Ovary (tissue), 10 donors: ENCODE measurements at regions of chr2 and their contacts with region 1.

Region 1: GRCh38 chr2:24022975-24023575 is 13.2 kb downstream of the MFSD2B start:
- DNase-seq: no peak
- H3K4me3 ChIP-seq: no peak overlapping the region
- H3K27ac ChIP-seq: no peak overlapping the region
- H3K4me1 ChIP-seq: no peaks in the 10 kb centered on the region
- H3K27me3 ChIP-seq: no peaks in the 10 kb centered on the region
- CTCF ChIP-seq: no peak
- EP300 ChIP-seq: no peak
- POLR2A ChIP-seq: no peak

Region 2: DNA sequence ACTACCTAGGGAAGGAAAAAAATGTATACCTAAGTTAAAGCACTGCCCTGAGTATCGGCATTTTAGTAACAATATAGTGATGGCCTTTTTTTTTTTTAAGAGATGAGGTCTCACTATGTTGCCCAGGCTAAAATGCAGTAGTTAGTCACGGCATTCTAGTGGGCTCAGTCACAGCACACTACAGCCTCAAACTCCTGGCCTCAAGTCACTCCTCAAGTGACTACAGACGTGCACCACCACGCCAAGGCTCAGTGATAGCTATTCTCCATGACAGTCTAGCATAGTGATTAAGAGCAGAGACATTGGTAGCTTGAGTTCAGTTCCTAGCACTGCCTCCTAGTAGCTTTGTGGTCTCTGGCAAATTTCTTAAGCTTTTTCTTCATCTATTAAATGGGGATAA is 55.2 kb before region 1 on chr2:
- intact Hi-C with region 1: no loop called
- DNase-seq: no peak
- H3K4me3 ChIP-seq: no peak overlapping the region
- H3K27ac ChIP-seq: no peak overlapping the region
- H3K4me1 ChIP-seq: no peaks in the 10 kb centered on the region
- H3K27me3 ChIP-seq: no peaks in the 10 kb centered on the region
- CTCF ChIP-seq: no peak
- EP300 ChIP-seq: no peak
- POLR2A ChIP-seq: no peak

Region 3: DNA sequence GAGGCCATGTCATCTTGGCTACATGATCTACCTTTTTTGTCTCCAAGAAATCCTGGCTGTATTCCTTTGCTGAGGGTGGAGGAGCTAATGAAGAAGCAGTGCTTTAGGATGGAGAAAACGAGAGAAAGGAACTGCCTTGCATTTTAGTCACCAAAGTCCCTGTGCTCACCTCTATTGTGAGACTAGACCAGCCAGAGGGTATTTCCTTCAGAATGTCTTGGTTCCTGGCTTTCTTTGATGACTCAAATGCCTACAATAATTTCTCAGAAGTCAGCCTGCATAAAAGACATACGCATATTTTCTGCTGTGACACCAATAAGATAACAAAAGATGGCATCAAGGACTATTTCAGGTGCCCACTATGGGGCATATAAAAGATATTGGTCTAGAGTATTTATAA is 42.3 kb after region 1 on chr2:
- intact Hi-C with region 1: loop called in 1 of 4 experiments (anchors 1 kb)
- DNase-seq: no peak
- H3K4me3 ChIP-seq: no peak overlapping the region
- H3K27ac ChIP-seq: no peak overlapping the region
- H3K4me1 ChIP-seq: no peaks in the 10 kb centered on the region
- H3K27me3 ChIP-seq: no peaks in the 10 kb centered on the region
- CTCF ChIP-seq: no peak
- EP300 ChIP-seq: no peak
- POLR2A ChIP-seq: no peak

Region 4: GRCh38 chr2:24329700-24330099 is 306.6 kb after region 1 on chr2:
- intact Hi-C with region 1: no loop called
- DNase-seq: no peak
- H3K4me3 ChIP-seq: no peak overlapping the region
- H3K27ac ChIP-seq: no peak overlapping the region
- H3K4me1 ChIP-seq: peaks cover 6% of the 10 kb centered on the region
- H3K27me3 ChIP-seq: no peaks in the 10 kb centered on the region
- CTCF ChIP-seq: no peak
- EP300 ChIP-seq: no peak
- POLR2A ChIP-seq: no peak